MCF 10A (cell line): ENCODE measurements at regions of chr20 and their contacts with region 1.

Region 1: DNA sequence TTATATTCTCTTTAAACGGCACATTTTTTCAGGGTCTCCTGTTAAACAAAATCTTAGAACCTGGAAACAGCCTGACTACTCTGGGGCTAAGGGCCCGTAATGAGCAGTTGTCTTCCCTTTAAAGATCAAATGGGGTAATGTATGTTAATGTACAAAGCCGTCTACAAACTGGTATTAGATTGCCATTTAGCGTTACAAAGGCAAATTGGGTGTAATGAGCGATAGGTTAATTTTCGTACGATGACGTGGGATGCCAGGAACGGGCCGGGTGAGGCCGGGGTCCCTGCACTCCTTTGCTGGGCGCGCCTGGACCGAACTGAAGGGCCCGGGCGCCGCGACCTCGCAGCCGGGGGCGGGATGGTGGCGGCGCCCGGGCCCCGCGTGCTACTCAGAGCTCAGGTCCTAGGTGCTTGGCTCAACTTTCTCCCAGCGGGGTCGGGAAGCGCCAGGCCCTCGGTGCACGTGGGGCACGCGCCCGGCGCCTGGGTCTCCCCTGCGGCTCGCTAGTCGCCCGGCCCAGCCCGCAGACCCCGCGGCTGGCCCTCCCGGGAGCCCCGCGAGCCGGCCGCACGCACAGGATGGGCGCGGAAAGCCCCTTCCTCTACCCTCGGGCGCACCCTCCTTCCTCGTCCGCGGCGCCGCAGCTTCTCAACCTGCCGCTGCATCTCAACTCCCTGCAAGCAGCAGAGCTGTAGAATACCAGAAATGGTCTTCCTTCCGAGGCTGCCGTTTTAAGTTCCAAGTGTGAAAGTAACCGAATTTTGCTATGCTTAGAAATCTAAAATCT is 5.9 kb downstream of the NKX2-4 start:
- DNase-seq: no peak
- H3K4me3 Mint-ChIP-seq: no peak overlapping the region
- H3K27ac Mint-ChIP-seq: no peak overlapping the region
- H3K4me1 Mint-ChIP-seq: no peaks in the 10 kb centered on the region
- H3K27me3 Mint-ChIP-seq: no peaks in the 10 kb centered on the region
- CTCF ChIP-seq: no peak

Region 2: GRCh38 chr20:21146215-21146614 is 245.2 kb before region 1 on chr20:
- CTCF ChIA-PET with region 1: no interaction called
- POLR2A ChIA-PET with region 1: no interaction called
- intact Hi-C with region 1: no loop called
- DNase-seq: no peak
- H3K4me3 Mint-ChIP-seq: no peak overlapping the region
- H3K27ac Mint-ChIP-seq: no peak overlapping the region
- H3K4me1 Mint-ChIP-seq: peaks cover 8% of the 10 kb centered on the region
- H3K27me3 Mint-ChIP-seq: no peaks in the 10 kb centered on the region
- CTCF ChIP-seq: no peak

Region 3: DNA sequence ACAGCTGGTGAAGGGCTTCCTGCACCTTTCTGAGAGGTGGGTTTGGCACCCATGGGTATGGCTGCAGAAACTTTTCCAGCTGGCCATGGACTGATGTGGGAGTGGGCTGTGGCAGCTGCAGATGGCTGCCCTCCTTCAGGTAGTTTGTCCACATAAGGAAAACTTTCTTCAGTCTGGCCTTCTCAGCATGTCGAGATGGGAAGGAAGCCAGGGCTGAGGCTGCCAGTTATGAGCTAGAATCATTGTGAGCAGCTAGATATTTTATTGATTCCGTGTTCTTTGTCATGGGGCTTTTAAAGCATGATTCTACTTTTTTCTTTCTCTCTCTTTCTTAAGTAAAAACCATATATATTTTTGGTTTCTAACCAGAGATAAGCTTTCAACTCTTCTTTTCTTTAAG is 10.7 kb before region 1 on chr20:
- CTCF ChIA-PET with region 1: interaction called, 4 read pairs
- POLR2A ChIA-PET with region 1: interaction called, 10 read pairs
- intact Hi-C with region 1: no loop called
- DNase-seq: no peak
- H3K4me3 Mint-ChIP-seq: no peak overlapping the region
- H3K27ac Mint-ChIP-seq: no peak overlapping the region
- H3K4me1 Mint-ChIP-seq: peaks cover 5% of the 10 kb centered on the region
- H3K27me3 Mint-ChIP-seq: no peaks in the 10 kb centered on the region
- CTCF ChIP-seq: no peak